Activated CD4-positive, alpha-beta T cell treated with anti-CD3 and anti-CD28 coated beads, Interleukin-2, amount 10 ng/mL, durations not matched to agents 7 days and 5 days (primary cell): ENCODE measurements at regions of chr2 and their contacts with region 1.

Region 1: GRCh38 chr2:174461221-174461620 is 25.6 kb downstream of the GPR155 start:
- DNase-seq: no peak
- H3K4me3 Mint-ChIP-seq: no peak overlapping the region
- H3K27ac Mint-ChIP-seq: no peak overlapping the region
- H3K4me1 Mint-ChIP-seq: peaks cover 2% of the 10 kb centered on the region
- H3K27me3 Mint-ChIP-seq: no peaks in the 10 kb centered on the region

Region 2: DNA sequence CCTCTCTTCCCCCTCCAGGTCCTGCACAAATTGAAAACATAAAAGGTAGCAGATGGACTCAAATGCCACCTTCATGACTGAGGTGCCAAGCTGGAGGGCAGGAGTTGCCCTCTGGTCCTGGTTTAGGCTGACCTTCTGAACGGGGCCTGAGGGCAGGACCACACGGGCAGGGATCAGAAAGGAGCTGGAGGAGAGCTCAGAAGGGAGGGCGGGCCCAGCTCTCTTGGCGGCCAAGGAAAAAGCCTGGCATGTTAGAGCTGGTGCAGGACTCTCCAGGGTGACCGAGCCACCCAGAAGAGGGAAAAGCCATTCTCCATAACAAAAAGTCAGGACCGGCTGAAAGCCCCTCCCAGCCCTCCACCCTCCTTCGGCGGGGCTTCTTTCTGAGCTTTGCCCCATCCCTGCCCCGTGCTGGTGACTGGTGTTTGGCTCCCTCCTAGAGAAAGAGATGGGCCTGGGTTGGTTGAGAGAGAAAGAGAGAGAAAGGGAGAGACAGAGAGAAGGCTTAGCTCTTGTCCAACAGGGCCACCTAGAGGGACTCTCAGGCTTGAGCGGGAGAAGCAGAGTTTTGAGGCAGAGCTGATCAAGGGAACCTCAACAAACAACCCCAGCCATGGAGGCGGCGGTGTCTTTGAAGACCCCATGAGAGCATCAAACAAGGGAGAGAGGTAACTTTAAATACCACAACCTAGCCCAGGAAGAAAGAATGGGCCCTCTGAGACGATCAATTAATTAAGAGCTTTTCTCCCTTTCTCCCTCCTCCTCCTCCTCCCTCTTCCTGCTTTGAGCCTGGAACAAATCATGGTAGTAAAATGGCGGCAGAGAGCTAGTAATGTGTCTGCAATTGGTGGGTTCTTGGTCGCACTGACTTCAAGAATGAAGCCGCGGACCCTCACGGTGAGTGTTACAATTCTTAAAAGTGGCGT is 85.6 kb after region 1 on chr2:
- CTCF ChIA-PET with region 1: interaction called, 55 read pairs
- POLR2A ChIA-PET with region 1: interaction called, 6 read pairs
- DNase-seq: peak; percentile 65
- H3K4me3 Mint-ChIP-seq: no peak overlapping the region
- H3K27ac Mint-ChIP-seq: peak overlapping the region; percentile 76
- H3K4me1 Mint-ChIP-seq: peaks cover 11% of the 10 kb centered on the region
- H3K27me3 Mint-ChIP-seq: peaks cover 3% of the 10 kb centered on the region

Region 3: DNA sequence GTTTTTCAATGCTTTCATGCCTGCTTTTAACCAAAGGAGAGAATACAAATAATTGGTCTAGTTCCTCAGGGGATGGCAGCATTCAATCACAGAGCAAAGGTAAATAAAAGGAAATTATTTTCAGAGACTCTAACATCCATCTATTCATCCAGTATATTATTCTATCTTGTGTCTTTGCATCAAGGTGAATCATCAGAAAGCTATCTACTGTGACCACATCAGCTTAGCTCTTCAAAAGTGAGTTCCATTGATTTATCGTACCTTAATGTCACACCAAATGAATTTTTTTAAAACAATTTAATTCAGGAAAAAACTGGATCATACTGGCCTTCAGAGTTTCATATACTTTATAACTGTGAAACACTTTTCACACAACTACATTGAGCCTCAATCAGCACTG is 477.8 kb after region 1 on chr2:
- CTCF ChIA-PET with region 1: no interaction called
- POLR2A ChIA-PET with region 1: no interaction called
- DNase-seq: no peak
- H3K4me3 Mint-ChIP-seq: no peak overlapping the region
- H3K27ac Mint-ChIP-seq: no peak overlapping the region
- H3K4me1 Mint-ChIP-seq: no peaks in the 10 kb centered on the region
- H3K27me3 Mint-ChIP-seq: no peaks in the 10 kb centered on the region